ENCODE measurements at regions of chr1 and their contacts with region 1.

Region 1: DNA sequence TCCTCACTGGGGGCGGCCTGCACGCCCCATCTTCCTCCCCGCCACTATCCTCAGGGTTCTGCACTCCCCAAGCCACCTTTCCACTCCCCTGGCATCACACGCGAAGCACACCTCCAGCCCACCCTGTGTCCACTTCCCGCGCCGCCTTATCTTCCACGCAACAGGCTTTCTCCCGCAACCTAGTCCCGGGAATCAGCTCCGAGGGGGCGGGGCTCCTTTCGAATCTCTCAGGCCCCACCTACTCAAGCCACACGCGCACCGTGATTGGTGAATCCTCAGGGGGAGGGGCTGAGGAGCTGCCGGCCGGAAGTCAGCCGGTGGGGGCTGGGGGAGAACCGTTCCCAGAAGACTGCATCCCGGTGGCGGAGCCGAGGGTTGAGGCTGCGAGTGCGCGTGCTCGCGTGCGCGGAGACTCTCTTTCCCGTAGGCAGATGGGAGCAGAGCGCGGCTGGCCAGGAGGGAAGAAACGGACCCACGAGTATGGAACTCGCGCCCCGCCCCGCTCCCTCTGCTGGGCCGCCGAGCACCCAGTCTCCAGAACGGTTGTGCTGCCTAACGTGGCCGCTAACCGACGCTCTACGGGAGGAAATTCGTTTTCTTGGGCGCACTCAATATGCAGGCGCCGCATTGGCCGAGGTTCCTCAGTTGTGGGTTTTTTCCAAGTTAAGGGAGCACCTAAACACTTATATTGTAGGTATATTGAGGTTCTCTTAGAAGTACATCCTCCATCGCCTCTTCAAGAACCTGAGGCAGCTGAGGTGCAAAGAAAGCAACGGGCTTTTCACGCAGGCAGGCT is at the start of gene PSRC1:
- DNase-seq: peak; percentile 73 to 94 (median 87)
- ATAC-seq: peak; percentile 94
- H3K4me3 ChIP-seq: peak within 1 kb of the TSS; percentile 72 to 82
- H3K4me3 Mint-ChIP-seq: peak within 1 kb of the TSS; percentile 93
- H3K27ac ChIP-seq: peak within 1 kb of the TSS; percentile 46 to 79
- H3K27ac Mint-ChIP-seq: peak within 1 kb of the TSS; percentile 88
- H3K4me1 ChIP-seq: peaks cover 12% of the 10 kb centered on the region
- H3K4me1 Mint-ChIP-seq: peaks cover 16% of the 10 kb centered on the region
- H3K27me3 ChIP-seq: no peaks in the 10 kb centered on the region
- H3K27me3 Mint-ChIP-seq: no peaks in the 10 kb centered on the region
- CTCF ChIP-seq: peak; percentile 40
- total RNA-seq, gene PSRC1: not detected

Region 2: GRCh38 chr1:109213785-109214468 is 69.2 kb before region 1 on chr1 and contains the start of gene SARS1:
- CTCF ChIA-PET with region 1: no interaction called
- POLR2A ChIA-PET with region 1: no interaction called
- intact Hi-C with region 1: loop called (anchors 1 to 2 kb)
- DNase-seq: peak; percentile 67 to 94 (median 85)
- ATAC-seq: peak; percentile 86
- H3K4me3 ChIP-seq: peak within 1 kb of the TSS; percentile 96 to 100
- H3K4me3 Mint-ChIP-seq: peak within 1 kb of the TSS; percentile 100
- H3K27ac ChIP-seq: peak within 1 kb of the TSS; percentile 79
- H3K27ac Mint-ChIP-seq: peak within 1 kb of the TSS; percentile 95
- H3K4me1 ChIP-seq: peaks cover 27% of the 10 kb centered on the region
- H3K4me1 Mint-ChIP-seq: peaks cover 44% of the 10 kb centered on the region
- H3K27me3 ChIP-seq: no peaks in the 10 kb centered on the region
- H3K27me3 Mint-ChIP-seq: peaks cover 2% of the 10 kb centered on the region
- CTCF ChIP-seq: no peak
- total RNA-seq, gene SARS1: 113 to 118 TPM

Region 3: GRCh38 chr1:109248797-109249642 is 34.1 kb before region 1 on chr1 and contains the start of gene CELSR2:
- CTCF ChIA-PET with region 1: interaction called, 5 read pairs
- POLR2A ChIA-PET with region 1: no interaction called
- intact Hi-C with region 1: loop called in 1 of 2 experiments (anchors 1 kb)
- DNase-seq: peak; percentile 21 to 83 (median 57)
- ATAC-seq: peak; percentile 97
- H3K4me3 ChIP-seq: peak within 1 kb of the TSS; percentile 39 to 41
- H3K4me3 Mint-ChIP-seq: peak within 1 kb of the TSS; percentile 72
- H3K27ac ChIP-seq: no peak within 1 kb of the TSS
- H3K27ac Mint-ChIP-seq: no peak within 1 kb of the TSS
- H3K4me1 ChIP-seq: peaks cover 14% of the 10 kb centered on the region
- H3K4me1 Mint-ChIP-seq: peaks cover 14% of the 10 kb centered on the region
- H3K27me3 ChIP-seq: peaks cover 0 to 3% of the 10 kb centered on the region in 2 experiments
- H3K27me3 Mint-ChIP-seq: peaks cover 8% of the 10 kb centered on the region
- CTCF ChIP-seq: no peak
- total RNA-seq, gene CELSR2: 3.8 TPM

Region 4: DNA sequence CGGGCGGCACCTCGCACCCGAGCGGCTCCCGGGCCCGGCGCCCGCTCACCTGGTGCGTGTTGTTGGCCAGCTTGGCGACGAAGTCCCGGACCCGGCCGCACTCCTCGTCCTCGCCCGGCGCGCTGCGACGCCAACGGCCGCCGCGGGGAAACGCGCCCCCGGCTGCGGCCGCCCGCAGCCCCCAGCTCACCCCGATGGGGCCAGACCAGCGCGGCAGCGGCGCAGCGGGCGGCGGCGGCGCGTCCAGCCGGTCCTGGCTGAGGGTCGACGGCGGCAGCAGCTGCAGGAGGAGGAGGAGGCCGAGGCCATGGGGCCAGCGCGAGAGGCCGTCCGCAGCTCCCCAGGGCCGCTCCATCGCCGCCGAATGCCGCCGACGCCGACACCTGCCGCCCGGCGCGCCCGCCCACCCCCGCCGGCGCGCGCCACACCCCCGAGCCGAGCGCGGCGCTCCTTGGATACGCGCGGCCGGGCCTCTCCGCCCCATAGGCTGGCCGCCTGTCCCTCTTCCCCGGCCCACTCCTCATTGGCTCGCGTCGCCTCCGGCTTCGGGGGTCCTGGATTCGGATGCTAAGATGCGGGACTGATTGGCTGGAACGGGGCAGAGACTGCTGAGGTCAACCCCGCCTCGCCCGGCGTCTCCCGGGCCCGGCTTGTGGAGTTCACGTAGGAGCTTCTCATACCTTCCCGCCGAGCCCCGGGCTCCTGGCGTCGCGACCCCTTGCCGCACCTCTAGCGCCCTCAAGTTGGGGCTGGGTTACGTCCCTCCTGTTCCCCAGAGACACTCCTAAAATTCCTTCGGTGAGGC is 114.6 kb after region 1 on chr1 and contains the start of gene SORT1:
- CTCF ChIA-PET with region 1: interaction called, 109 read pairs
- POLR2A ChIA-PET with region 1: interaction called, 3 read pairs
- intact Hi-C with region 1: loop called in 1 of 2 experiments (anchors 1 kb)
- DNase-seq: peak; percentile 25 to 84 (median 71)
- ATAC-seq: peak; percentile 97
- H3K4me3 ChIP-seq: peak within 1 kb of the TSS; percentile 49 to 53
- H3K4me3 Mint-ChIP-seq: peak within 1 kb of the TSS; percentile 83
- H3K27ac ChIP-seq: no peak within 1 kb of the TSS
- H3K27ac Mint-ChIP-seq: no peak within 1 kb of the TSS
- H3K4me1 ChIP-seq: peaks cover 9% of the 10 kb centered on the region
- H3K4me1 Mint-ChIP-seq: peaks cover 15% of the 10 kb centered on the region
- H3K27me3 ChIP-seq: peaks cover 10 to 21% of the 10 kb centered on the region in 2 experiments
- H3K27me3 Mint-ChIP-seq: peaks cover 34% of the 10 kb centered on the region
- CTCF ChIP-seq: no peak
- total RNA-seq, gene SORT1: 0.61 to 0.73 TPM

Region 5: GRCh38 chr1:109620841-109621286 is 337.7 kb after region 1 on chr1:
- CTCF ChIA-PET with region 1: no interaction called
- POLR2A ChIA-PET with region 1: no interaction called
- intact Hi-C with region 1: loop called in 1 of 2 experiments (anchors 2 kb)
- DNase-seq: peak; percentile 91 to 99 (median 97)
- ATAC-seq: peak; percentile 87
- H3K4me3 ChIP-seq: peak overlapping the region; percentile 90 to 92
- H3K4me3 Mint-ChIP-seq: peak overlapping the region; percentile 98
- H3K27ac ChIP-seq: peak overlapping the region; percentile 86 to 91
- H3K27ac Mint-ChIP-seq: peak overlapping the region; percentile 97
- H3K4me1 ChIP-seq: peaks cover 50% of the 10 kb centered on the region
- H3K4me1 Mint-ChIP-seq: peaks cover 64% of the 10 kb centered on the region
- H3K27me3 ChIP-seq: no peaks in the 10 kb centered on the region
- H3K27me3 Mint-ChIP-seq: no peaks in the 10 kb centered on the region
- CTCF ChIP-seq: no peak

Region 6: DNA sequence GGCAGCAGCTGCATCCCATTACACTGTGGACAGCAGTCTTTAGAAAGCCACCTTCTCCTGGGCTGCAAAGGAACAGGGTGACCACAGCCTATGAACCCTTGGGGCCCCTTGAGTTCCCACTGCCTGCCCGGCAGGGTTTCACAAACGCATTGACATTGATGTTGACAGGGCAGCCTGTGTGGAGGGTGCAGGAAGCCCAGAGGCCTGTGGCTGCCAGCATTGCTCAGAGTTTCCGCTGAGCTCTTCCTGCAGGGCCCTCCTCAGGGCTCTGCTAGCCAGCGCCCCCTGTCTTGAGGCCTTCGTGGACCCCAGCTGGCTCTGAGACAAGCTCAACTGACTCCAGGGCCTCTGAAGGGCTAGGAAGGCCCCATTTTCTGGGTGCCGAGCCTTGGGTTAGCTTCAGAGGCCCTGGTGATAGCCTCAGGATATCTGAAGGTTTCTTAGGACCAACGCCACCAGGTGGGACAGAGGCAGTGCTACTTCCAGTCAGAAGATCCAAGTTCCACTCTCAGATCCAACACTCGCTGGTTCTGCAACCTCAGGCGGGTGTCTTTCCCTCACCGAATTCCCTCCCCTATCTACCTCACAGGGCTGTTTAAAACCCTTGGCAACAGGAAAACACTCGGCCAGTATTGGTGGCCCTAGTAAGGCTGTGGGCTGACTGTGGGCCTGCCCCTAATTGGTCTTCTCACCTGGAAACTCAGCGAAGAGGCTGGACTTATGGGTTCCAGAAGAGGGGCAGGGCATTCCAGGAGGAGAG is 507.8 kb after region 1 on chr1:
- CTCF ChIA-PET with region 1: no interaction called
- POLR2A ChIA-PET with region 1: no interaction called
- intact Hi-C with region 1: loop called in 1 of 2 experiments (anchors 5 kb)
- DNase-seq: peak; percentile 55 to 90 (median 84)
- ATAC-seq: peak; percentile 94
- H3K4me3 ChIP-seq: no peak overlapping the region
- H3K4me3 Mint-ChIP-seq: no peak overlapping the region
- H3K27ac ChIP-seq: peak overlapping the region; percentile 14 to 74
- H3K27ac Mint-ChIP-seq: peak overlapping the region; percentile 85
- H3K4me1 ChIP-seq: peaks cover 59% of the 10 kb centered on the region
- H3K4me1 Mint-ChIP-seq: peaks cover 70% of the 10 kb centered on the region
- H3K27me3 ChIP-seq: no peaks in the 10 kb centered on the region
- H3K27me3 Mint-ChIP-seq: no peaks in the 10 kb centered on the region
- CTCF ChIP-seq: peak; percentile 54

Region 7: DNA sequence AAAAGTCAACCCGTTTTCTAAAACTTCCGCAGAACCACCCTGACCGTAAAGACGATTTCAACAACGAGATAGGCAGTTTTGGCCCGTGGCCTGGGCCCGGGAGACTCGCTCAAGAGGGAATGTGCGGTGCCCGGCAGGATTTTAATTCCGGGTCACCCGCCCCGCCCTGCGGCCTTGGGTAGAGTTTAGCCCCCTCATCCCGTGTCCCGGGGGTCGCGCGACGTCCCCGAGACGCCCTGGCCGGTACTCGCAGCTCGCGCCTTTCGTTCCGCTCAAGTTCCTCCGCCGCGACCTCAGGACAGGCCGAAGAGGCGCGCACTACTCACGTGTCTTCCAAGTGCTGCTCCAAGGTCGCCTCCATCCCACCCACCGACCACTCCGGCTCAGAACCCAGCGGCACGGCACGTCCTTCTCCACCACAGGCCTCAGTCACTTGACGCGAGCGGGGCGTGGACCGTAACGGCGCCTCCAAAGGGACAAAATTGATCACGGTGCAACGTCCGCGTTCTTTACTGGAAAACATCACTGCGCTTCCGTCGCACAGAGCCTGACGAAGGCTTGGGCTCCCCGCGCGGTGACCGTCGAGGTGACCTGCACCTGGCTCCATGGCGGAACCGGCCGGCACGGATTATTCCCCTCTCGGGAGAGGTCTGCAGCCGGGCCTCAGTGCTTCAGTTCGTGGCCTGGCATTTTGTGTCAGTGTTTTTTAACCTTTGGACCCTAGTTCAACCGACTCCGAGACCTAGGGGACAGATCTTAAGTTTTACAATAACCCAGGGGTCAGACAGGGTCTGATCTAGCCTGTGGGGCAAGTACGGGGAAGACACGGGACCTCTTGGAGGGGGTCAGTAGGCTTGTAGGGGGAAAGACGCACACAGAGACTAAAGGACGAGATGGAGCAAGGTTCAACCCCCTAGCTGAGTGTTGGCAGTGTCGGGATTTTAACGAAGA is 1124.4 kb after region 1 on chr1 and contains the start of gene LAMTOR5:
- CTCF ChIA-PET with region 1: no interaction called
- POLR2A ChIA-PET with region 1: no interaction called
- intact Hi-C with region 1: loop called in 1 of 2 experiments (anchors 10 kb)
- DNase-seq: peak; percentile 83 to 95 (median 89)
- ATAC-seq: peak; percentile 93
- H3K4me3 ChIP-seq: peak within 1 kb of the TSS; percentile 92 to 99
- H3K4me3 Mint-ChIP-seq: peak within 1 kb of the TSS; percentile 99
- H3K27ac ChIP-seq: peak within 1 kb of the TSS; percentile 91 to 92
- H3K27ac Mint-ChIP-seq: peak within 1 kb of the TSS; percentile 99
- H3K4me1 ChIP-seq: peaks cover 23% of the 10 kb centered on the region
- H3K4me1 Mint-ChIP-seq: peaks cover 29% of the 10 kb centered on the region
- H3K27me3 ChIP-seq: no peaks in the 10 kb centered on the region
- H3K27me3 Mint-ChIP-seq: no peaks in the 10 kb centered on the region
- CTCF ChIP-seq: no peak
- total RNA-seq, gene LAMTOR5: 106 to 109 TPM